ENCODE measurements at regions of chr13 and their contacts with region 1.

Region 1: DNA sequence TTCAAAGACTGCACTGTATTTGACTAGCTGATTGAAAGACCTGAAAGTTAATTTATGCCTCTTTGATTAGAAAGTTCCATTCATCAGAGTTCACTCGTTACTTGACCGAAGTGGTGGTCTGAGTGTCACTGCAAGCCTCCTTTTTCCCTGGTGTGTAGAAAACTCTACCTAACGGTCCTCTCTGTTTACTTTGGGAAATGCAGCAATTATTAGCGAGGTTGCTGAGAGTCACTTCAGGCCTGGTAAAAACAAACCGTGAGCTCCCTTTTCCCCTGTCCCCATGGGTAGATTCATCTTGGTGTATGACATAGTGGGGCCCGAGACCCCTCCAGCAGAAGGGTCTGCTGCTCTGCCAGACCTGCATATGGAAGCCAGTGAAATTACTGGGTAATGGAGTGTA is 126.8 kb upstream of the RNF113B start:
- DNase-seq: no peak

Region 2: GRCh38 chr13:98144801-98145350 is 159.0 kb before region 1 on chr13:
- intact Hi-C with region 1: no loop called
- DNase-seq: no peak

Region 3: DNA sequence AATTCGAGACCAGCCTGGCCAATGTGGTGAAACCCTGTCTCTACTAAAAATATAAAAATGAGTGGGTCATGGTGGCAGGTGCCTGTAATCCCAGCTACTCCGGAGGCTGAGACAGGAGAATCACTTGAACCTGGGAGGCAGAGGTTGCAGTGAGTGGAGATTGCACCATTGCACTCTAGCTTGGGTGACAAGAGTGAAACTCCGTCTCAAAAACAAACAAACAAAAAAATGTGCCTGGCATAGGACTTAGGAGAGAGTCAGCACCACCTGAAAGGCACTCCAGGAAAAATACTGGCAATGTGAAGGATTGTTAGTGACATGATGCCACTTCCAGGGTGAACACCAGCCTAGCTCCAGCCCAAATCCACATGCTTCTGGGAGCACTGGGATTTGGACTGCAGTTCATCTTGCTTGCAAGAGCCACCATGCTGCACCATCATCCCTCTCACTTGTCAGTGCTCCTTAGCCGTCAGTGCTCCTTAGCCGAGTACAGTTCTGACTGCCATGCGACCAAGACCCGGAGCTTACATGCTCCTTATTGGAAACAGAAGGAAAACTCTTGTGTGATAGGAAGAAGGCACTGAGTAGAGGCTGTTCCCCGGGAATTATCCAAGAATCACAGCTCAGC is 18.3 kb after region 1 on chr13:
- intact Hi-C with region 1: loop called in 1 of 2 experiments (anchors 1 kb)
- DNase-seq: no peak

Region 4: DNA sequence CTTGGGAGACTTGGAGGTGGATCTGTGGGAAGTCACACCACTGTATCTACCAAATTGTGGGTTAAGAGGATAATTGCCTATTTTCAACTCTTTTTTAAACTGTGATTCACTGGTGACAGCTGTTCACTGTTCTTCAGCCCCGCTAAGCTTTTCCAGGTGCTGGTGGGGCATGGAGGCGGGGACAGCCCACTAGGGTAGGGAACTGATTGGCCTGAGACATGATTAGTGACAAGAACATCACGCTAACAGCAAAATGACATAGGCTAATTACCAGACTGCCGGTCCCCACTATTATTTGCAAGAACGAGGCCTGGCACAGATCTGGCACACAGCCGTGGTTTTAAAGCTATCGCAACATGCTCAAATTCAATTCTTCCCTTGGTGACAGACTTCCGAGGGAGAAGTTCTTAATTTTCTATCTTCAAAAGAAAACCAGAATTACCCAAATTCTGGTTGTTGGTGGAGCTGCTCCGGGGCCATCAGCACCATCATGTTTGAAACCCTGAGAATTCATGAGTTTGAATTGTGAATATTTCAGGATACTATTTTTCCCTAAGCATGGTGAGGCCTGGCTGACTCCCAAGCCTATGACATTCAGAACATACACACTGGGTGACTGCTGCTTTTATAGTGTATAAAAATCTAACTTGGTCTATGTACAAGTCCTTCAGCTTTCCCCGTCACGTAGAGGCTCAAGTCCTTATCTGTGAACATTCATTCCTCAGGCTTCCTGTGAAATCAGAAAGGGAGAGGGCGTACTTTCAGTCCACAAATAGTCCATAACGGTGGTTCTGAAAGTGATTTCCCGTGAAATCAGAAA is 656.1 kb after region 1 on chr13:
- intact Hi-C with region 1: no loop called
- DNase-seq: no peak